Activated B cell treated with CpG ODN at 0.5 μM for 24 hours (primary cell): ENCODE measurements at regions of chr15 and their contacts with region 1.

Region 1: GRCh38 chr15:69576035-69576526 is 123.5 kb downstream of the RPLP1 start:
- DNase-seq: peak; percentile 57
- ATAC-seq: peak; percentile 83
- H3K4me3 Mint-ChIP-seq: no peak overlapping the region
- H3K27ac Mint-ChIP-seq: no peak overlapping the region
- H3K4me1 Mint-ChIP-seq: peaks cover 14% of the 10 kb centered on the region
- H3K27me3 Mint-ChIP-seq: peaks cover 11% of the 10 kb centered on the region
- CTCF ChIP-seq: no peak

Region 2: GRCh38 chr15:69484832-69485231 is 91.2 kb before region 1 on chr15:
- CTCF ChIA-PET with region 1: no interaction called
- POLR2A ChIA-PET with region 1: no interaction called
- intact Hi-C with region 1: no loop called
- DNase-seq: no peak
- ATAC-seq: no peak
- H3K4me3 Mint-ChIP-seq: no peak overlapping the region
- H3K27ac Mint-ChIP-seq: no peak overlapping the region
- H3K4me1 Mint-ChIP-seq: no peaks in the 10 kb centered on the region
- H3K27me3 Mint-ChIP-seq: peaks cover 12% of the 10 kb centered on the region
- CTCF ChIP-seq: no peak

Region 3: DNA sequence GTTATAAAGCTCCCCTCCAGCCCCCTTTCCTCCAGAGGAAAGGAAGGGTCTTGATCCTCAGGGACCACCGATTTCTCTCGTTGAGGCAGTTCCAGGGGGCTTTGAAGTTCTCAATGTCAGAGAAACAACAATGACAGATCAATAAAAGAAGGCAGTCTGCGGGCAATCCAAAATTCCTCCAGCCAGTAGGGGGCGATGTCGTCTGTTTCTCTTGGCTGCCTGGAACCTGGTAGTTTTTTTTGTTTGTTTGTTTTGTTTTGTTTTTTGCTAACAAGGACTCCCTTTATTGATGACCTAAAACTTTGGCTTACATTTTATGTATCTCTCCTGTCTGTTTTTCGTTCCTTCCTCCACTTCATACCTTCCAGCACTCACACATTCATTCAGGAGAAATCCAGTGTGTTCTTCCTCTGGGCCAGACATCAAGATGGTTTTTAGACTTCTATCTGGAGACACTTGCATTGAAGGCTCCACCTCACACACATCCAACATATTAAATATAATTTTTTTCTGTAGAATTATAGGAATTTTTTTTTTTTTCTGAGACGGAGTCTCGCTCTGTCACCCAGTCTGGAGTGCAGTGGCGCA is 153.2 kb after region 1 on chr15:
- CTCF ChIA-PET with region 1: interaction called, 4 read pairs
- POLR2A ChIA-PET with region 1: no interaction called
- intact Hi-C with region 1: loop called (anchors 2 kb)
- DNase-seq: peak; percentile 49
- ATAC-seq: no peak
- H3K4me3 Mint-ChIP-seq: no peak overlapping the region
- H3K27ac Mint-ChIP-seq: no peak overlapping the region
- H3K4me1 Mint-ChIP-seq: peaks cover 18% of the 10 kb centered on the region
- H3K27me3 Mint-ChIP-seq: peaks cover 3% of the 10 kb centered on the region
- CTCF ChIP-seq: peak; percentile 73

Region 4: GRCh38 chr15:70196314-70197291 is 620.5 kb after region 1 on chr15:
- CTCF ChIA-PET with region 1: no interaction called
- POLR2A ChIA-PET with region 1: no interaction called
- intact Hi-C with region 1: loop called (anchors 10 kb)
- DNase-seq: peak; percentile 62
- ATAC-seq: peak; percentile 82
- H3K4me3 Mint-ChIP-seq: peak overlapping the region; percentile 55
- H3K27ac Mint-ChIP-seq: peak overlapping the region; percentile 79
- H3K4me1 Mint-ChIP-seq: peaks cover 58% of the 10 kb centered on the region
- H3K27me3 Mint-ChIP-seq: peaks cover 7% of the 10 kb centered on the region
- CTCF ChIP-seq: no peak

Region 5: GRCh38 chr15:70362886-70363285 is 786.8 kb after region 1 on chr15:
- CTCF ChIA-PET with region 1: no interaction called
- POLR2A ChIA-PET with region 1: no interaction called
- intact Hi-C with region 1: loop called (anchors 5 kb)
- DNase-seq: no peak
- ATAC-seq: no peak
- H3K4me3 Mint-ChIP-seq: no peak overlapping the region
- H3K27ac Mint-ChIP-seq: no peak overlapping the region
- H3K4me1 Mint-ChIP-seq: peaks cover 13% of the 10 kb centered on the region
- H3K27me3 Mint-ChIP-seq: no peaks in the 10 kb centered on the region
- CTCF ChIP-seq: no peak

Region 6: GRCh38 chr15:70512772-70513362 is 936.8 kb after region 1 on chr15:
- CTCF ChIA-PET with region 1: no interaction called
- POLR2A ChIA-PET with region 1: no interaction called
- intact Hi-C with region 1: loop called (anchors 1 kb)
- DNase-seq: no peak
- ATAC-seq: peak; percentile 80
- H3K4me3 Mint-ChIP-seq: no peak overlapping the region
- H3K27ac Mint-ChIP-seq: no peak overlapping the region
- H3K4me1 Mint-ChIP-seq: peaks cover 32% of the 10 kb centered on the region
- H3K27me3 Mint-ChIP-seq: peaks cover 5% of the 10 kb centered on the region
- CTCF ChIP-seq: no peak

Region 7: DNA sequence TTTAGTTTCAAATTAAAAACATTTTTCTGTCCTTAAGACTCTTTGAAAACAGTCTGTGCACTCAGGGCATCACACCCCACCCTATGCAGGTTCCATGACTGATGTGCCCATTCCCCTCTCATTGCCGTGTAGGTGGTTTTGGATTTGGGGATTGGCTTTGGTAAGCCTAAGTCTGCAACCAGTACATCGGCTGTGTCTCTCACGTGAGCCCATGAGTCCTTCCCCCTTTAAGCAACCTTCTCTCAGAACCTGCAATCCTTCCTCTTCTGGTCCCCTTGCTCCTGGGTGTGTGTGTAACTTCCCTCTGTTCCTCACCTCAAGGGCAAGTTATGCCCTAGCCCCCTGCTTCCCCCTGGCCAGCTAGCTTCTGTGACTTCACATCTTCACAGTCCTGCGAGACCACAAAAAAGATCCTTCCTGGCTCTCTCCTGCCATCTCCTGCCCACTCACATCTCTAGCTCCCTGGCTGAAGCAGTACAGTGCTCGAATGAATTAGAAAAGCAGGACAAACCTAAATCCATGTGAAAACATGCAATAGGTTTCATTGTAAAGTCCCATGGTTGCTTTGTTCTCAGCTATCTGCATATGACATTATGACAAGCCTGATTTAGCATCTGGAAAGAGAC is 1060.6 kb after region 1 on chr15:
- CTCF ChIA-PET with region 1: no interaction called
- POLR2A ChIA-PET with region 1: no interaction called
- intact Hi-C with region 1: loop called (anchors 5 kb)
- DNase-seq: no peak
- ATAC-seq: no peak
- H3K4me3 Mint-ChIP-seq: no peak overlapping the region
- H3K27ac Mint-ChIP-seq: no peak overlapping the region
- H3K4me1 Mint-ChIP-seq: peaks cover 3% of the 10 kb centered on the region
- H3K27me3 Mint-ChIP-seq: peaks cover 29% of the 10 kb centered on the region
- CTCF ChIP-seq: no peak

Region 8: DNA sequence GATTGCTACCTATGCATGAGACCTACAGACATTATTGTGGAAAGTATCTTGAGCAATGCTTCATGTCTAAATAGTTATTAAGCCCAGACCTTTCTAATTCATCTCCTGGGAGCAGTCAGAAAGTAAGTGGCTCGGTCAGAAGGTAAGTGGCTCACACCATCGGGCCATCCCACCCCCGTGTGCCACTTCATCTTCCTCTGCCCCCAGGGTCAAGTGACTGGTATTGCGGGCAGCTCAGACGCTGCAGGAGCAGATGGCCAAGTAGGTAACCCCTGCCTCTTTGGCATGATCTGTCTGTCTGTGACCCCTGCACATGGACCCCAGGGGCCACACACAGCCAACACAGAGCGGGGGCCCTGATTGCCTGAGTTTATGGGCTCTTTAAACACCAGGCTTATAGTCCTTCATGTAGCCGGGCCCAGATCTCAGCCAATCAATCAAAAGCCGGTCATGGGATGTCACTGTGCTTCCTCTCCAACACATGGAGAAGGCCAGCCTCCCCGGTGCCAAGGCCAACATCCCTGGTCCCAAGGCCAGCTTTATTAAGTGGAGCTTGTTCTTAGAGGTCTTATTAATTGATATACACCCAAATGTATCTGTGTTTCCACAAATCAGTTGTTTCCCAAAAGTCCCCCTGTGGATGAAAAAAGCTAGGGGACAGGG is 1235.0 kb after region 1 on chr15:
- CTCF ChIA-PET with region 1: no interaction called
- POLR2A ChIA-PET with region 1: no interaction called
- intact Hi-C with region 1: loop called (anchors 2 kb)
- DNase-seq: no peak
- ATAC-seq: no peak
- H3K4me3 Mint-ChIP-seq: no peak overlapping the region
- H3K27ac Mint-ChIP-seq: no peak overlapping the region
- H3K4me1 Mint-ChIP-seq: peaks cover 12% of the 10 kb centered on the region
- H3K27me3 Mint-ChIP-seq: peaks cover 6% of the 10 kb centered on the region
- CTCF ChIP-seq: no peak